Lower leg skin (tissue), 4 donors: ENCODE measurements at regions of chr2 and their contacts with region 1.

Region 1: DNA sequence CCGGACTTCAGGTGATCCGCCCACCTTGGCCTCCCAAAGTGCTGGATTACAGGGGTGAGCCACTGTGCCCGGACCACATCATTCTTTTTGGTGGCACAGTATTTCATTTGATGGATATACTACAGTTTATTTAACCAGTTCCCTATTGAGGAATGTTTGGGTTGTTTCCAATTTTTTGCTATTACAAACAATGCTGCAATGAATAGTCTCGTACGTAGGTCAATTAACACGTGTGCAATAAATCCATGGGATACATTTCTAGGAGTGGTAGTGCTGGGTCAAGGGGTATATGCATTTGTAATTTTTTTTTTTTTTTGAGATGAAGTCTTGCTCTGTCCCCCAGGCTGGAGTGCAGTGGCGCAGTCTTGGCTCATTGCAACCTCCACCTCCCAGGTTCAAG is 28.4 kb upstream of the XPO1 start:
- DNase-seq: no peak
- H3K4me3 ChIP-seq: no peak overlapping the region
- CTCF ChIP-seq: no peak
- POLR2A ChIP-seq: no peak

Region 2: GRCh38 chr2:62589691-62590356 is 1023.3 kb after region 1 on chr2:
- intact Hi-C with region 1: loop called (anchors 5 kb)
- DNase-seq: no peak
- H3K4me3 ChIP-seq: no peak overlapping the region
- CTCF ChIP-seq: no peak
- POLR2A ChIP-seq: no peak